ENCODE measurements at regions of chr17 and their contacts with region 1.

Region 1: GRCh38 chr17:82153745-82154375 is 55.8 kb upstream of the FASN start:
- DNase-seq: peak; percentile 77 to 89
- H3K4me3 ChIP-seq: no peak overlapping the region
- H3K4me3 Mint-ChIP-seq: no peak overlapping the region
- H3K27ac Mint-ChIP-seq: no peak overlapping the region
- H3K4me1 ChIP-seq: 0 out of 2 replicates have a peak, but pooled peaks cover 3% of the 10 kb centered on the region
- H3K4me1 Mint-ChIP-seq: no peaks in the 10 kb centered on the region
- H3K27me3 ChIP-seq: no peaks in the 10 kb centered on the region
- H3K27me3 Mint-ChIP-seq: no peaks in the 10 kb centered on the region
- CTCF ChIP-seq: peak; percentile 93 to 96

Region 2: DNA sequence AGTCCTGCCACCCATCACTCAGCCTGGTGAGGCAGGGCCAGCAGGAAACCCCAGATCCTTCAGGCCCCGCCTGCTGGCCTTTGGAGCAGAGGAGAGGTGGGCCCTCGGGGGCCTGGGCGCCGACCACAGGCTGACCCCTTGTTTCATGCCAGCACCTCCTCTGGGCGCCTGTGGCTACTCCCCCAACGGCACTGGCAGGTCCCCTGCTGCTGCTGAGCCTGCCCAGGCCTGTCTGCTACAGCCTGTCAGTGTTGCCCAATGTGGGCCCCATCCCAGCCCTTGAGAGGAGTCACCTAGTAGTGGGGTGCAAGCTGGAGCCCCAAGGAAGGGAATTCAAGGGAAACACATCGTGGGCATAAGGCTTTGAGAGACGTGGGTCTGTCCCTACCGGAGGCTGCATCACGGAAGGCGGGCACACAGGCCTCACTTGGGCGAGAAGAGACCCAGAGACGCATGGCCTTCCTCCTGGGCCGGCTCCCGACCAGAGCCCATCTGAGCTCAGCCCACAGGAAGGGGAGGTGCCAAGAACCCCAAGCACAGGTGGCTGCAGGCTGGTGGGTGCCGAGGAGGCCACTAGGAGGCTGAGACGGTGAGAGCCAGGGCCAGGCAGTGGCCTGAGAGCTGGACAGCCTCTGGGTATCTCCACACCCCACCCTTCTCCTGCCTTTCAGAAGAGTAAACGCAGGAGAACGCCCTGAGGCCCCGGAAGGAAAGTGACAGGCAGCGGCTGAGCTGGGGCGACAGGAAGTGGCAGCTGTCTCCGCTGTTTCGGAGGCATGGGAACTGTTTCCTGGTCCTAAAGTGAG is 47.8 kb before region 1 on chr17:
- CTCF ChIA-PET with region 1: interaction called, 9 read pairs
- POLR2A ChIA-PET with region 1: no interaction called
- intact Hi-C with region 1: loop called (anchors 1 kb)
- DNase-seq: peak; percentile 90 to 94
- H3K4me3 ChIP-seq: no peak overlapping the region
- H3K4me3 Mint-ChIP-seq: peak overlapping the region; percentile 50
- H3K27ac Mint-ChIP-seq: peak overlapping the region; percentile 87
- H3K4me1 ChIP-seq: peaks cover 63% of the 10 kb centered on the region
- H3K4me1 Mint-ChIP-seq: peaks cover 42% of the 10 kb centered on the region
- H3K27me3 ChIP-seq: no peaks in the 10 kb centered on the region
- H3K27me3 Mint-ChIP-seq: no peaks in the 10 kb centered on the region
- CTCF ChIP-seq: peak; percentile 33 to 75

Region 3: GRCh38 chr17:82205719-82206508 is 52.1 kb after region 1 on chr17:
- CTCF ChIA-PET with region 1: no interaction called
- POLR2A ChIA-PET with region 1: no interaction called
- intact Hi-C with region 1: no loop called
- DNase-seq: peak; percentile 88 to 90
- H3K4me3 ChIP-seq: no peak overlapping the region
- H3K4me3 Mint-ChIP-seq: peak overlapping the region; percentile 63
- H3K27ac Mint-ChIP-seq: peak overlapping the region; percentile 96
- H3K4me1 ChIP-seq: peaks cover 15% of the 10 kb centered on the region
- H3K4me1 Mint-ChIP-seq: peaks cover 12% of the 10 kb centered on the region
- H3K27me3 ChIP-seq: no peaks in the 10 kb centered on the region
- H3K27me3 Mint-ChIP-seq: no peaks in the 10 kb centered on the region
- CTCF ChIP-seq: peak; percentile 90 to 96

Measured in Caco-2 (cell line).